BJ (cell line): ENCODE measurements at regions of chr2 and their contacts with region 1.

Region 1: GRCh38 chr2:62489162-62489561 is 16.8 kb downstream of the TMEM17 start:
- DNase-seq: no peak
- H3K4me3 ChIP-seq: no peak overlapping the region
- H3K27me3 ChIP-seq: no peaks in the 10 kb centered on the region
- CTCF ChIP-seq: no peak

Region 2: DNA sequence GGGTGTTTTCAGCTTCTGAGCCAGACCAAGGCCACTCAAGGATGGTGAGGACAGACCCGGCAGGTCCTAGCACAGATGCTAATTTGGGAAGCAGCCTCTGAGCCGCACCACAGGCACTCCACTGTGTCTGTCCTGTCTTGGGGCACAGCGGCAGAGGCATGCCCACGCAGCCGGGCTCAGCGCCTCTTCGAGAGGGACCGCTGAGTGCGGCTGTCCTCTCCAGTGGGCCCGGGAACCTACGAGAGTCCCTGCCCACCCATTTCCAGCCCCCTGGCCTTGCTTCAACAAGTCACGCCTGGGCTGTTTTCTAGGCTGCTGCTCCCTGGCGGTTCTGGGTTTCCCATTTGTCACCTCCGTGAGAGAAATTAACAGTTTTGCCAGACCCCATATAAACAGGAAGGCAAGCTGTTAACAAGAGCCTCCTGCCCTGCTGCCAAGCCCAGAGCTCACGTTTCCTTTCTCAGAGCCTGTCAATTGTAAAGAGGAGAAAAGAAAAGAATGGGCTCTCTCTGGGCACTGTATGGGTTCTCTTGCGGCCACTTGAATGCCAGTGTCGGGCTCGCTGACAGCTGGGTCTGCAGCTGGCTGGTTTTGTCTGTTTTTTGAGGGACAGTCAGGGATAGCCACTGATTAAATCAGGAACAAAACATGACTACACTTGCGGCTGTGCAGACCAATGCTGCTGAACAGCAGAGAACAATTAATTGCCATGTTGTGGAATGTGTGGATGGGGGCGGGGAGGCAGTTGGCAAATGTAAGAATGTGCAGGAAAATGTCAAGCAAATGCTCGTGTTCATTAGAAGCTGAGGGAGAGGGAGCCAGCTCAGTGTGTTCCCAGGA is 13.8 kb before region 1 on chr2:
- CTCF ChIA-PET with region 1: interaction called, 10 read pairs
- POLR2A ChIA-PET with region 1: interaction called, 3 read pairs
- DNase-seq: no peak
- H3K4me3 ChIP-seq: no peak overlapping the region
- H3K27me3 ChIP-seq: no peaks in the 10 kb centered on the region
- CTCF ChIP-seq: no peak

Region 3: DNA sequence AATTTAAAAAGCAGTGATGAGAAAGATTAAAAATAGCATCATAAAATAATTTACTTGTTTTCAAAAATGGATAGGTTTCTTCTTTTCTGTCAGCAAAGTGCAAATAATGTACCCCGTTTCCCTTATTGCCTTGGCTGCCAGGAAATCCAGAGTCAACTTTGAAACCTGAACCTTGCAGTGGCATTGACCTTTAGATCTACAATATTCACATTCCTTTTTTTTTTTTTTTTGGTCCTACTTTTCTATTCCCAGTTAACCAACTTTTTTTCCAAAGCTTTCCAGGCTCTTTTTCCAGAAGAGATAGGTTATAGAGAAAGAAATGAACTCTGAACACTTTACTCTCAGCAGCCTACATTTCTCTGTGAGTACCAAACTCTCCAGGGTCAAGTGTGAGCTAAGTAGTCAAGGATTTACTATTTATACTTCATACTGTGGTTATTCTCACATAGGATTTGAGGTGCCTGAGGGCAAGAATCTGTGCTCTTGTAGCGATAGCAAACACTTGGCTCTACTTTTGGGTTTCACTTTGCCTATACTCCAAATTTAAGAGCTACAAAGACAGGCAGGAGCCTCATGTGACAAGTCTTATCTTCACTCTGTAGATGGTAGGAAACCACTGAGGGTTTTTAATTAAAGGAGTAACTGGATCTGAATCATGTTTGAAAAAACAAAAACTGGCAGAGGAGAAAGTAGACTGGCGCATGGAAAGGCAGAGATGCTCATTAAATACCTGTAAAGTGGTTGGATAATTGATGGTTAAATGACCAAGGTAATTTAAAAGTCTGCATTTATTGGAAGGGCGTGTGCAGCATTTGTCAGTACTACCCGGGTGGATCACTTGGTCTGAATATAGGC is 80.0 kb after region 1 on chr2:
- CTCF ChIA-PET with region 1: no interaction called
- POLR2A ChIA-PET with region 1: interaction called, 17 read pairs
- DNase-seq: no peak
- H3K4me3 ChIP-seq: no peak overlapping the region
- H3K27me3 ChIP-seq: no peaks in the 10 kb centered on the region
- CTCF ChIP-seq: no peak